MCF 10A (cell line): ENCODE measurements at regions of chr5 and their contacts with region 1.

Region 1: DNA sequence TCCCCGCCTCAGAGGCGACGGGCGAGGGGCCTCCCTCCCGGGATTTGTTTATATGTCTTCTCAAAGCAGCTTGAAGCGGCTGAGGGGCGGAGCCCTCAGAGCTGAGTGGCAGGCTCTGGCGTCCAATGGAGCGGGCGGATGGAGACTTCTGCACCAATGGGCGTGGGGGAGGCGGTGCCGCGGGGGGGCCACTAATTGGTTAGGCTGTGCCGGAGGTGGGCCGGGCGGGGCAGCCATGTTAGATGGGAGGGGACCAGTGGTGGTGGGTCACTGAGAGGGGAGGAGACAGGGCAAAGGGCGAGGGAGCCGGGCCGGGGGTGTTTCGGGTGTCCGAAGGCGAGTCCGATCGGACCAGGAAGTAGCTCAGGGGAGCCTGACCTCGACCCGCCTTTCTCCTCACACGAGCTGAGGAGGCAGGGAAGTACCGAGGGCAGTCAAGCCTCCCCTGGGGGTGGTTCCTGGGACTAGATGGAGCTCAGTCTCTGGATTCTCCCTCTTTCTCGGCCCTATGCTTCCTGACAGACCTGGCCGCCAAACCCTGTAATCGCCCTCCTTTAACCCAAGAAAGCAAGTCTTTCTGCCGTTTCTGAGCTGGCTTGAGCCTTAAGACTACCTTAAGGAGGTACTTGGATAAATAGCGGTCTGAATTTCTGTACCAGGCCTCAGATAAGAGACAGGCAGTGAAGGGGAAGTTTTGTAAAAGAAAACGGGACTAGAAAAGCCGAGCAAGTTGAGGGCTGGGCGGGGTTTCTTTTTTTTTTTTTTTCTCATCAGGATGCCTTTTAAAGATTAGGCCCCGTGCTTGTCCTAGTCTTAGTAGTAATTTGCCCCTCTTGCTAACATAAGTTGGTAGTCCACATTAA is 1.1 kb downstream of the CREBRF start:
- DNase-seq: peak; percentile 100
- H3K4me3 Mint-ChIP-seq: peak overlapping the region; percentile 99
- H3K27ac Mint-ChIP-seq: peak overlapping the region; percentile 80
- H3K4me1 Mint-ChIP-seq: peaks cover 16% of the 10 kb centered on the region
- H3K27me3 Mint-ChIP-seq: no peaks in the 10 kb centered on the region
- CTCF ChIP-seq: no peak

Region 2: DNA sequence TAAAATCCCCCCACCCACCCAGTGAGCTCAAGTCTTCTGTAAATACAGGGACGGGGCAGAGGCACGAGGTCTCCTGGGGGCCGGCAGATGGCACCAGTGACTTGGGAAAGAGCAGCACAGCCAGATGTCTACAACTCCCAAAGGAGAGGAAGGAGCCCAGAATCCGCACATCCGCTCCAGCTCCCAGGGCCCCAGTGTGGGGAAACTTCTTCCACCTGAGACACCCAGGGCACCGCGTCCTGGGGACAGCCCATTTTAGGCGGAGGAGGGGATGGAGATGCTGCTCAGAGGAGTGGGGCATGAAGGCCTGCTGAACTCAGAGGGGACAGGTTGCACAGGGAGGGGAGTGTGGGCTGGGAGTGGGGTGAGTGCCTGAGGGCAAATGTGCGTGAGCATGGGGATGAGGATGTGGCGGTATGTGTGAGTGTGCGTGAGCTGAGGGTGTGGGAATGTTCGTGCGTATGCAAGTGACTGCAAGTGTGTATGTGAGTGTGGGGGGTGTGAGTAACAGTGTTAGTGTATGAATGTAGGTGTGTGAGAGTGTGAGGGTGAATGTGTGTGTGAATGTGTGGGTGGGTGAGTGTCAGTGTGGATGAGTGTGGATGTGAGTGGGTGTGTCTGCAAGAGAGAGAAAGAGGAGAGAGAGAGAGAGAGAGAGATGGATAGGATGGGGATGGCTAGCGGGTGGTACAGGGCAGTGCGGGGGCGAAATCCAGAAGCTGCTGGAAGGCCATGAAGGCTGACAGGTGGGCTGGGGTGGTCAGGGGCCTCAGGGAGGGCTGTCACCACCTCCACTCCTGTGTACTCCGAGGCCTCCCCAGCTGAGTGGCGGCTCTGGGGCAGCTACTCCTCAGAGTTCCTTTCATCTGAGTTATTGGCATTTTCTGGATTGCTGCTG is 349.8 kb before region 1 on chr5:
- CTCF ChIA-PET with region 1: interaction called, 4 read pairs
- POLR2A ChIA-PET with region 1: no interaction called
- intact Hi-C with region 1: loop called (anchors 2 kb)
- DNase-seq: peak; percentile 89
- H3K4me3 Mint-ChIP-seq: no peak overlapping the region
- H3K27ac Mint-ChIP-seq: no peak overlapping the region
- H3K4me1 Mint-ChIP-seq: peaks cover 7% of the 10 kb centered on the region
- H3K27me3 Mint-ChIP-seq: no peaks in the 10 kb centered on the region
- CTCF ChIP-seq: peak; percentile 88

Region 3: DNA sequence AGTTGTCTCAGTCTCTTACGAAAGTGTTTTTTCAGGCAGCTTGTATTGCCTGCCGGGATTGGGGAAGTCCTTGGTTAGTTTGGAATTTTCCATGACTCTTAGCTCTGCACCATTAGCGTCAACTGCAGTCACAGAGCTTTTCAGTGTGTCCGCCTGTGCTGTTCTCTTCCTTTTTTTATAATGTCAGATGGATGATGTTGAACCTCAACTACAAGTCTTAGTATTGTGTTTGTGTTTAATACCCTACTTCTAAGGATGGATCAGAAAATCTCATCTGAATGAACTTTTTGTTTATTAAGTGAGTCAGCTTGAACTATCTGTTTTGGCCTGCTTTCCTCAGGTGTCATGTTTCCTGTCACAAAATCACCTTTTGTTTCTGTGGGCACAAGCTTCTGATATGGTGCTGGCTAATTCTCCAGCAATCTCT is 40.7 kb before region 1 on chr5:
- CTCF ChIA-PET with region 1: no interaction called
- POLR2A ChIA-PET with region 1: interaction called, 11 read pairs
- intact Hi-C with region 1: no loop called
- DNase-seq: peak; percentile 70
- H3K4me3 Mint-ChIP-seq: peak overlapping the region; percentile 35
- H3K27ac Mint-ChIP-seq: peak overlapping the region; percentile 89
- H3K4me1 Mint-ChIP-seq: peaks cover 52% of the 10 kb centered on the region
- H3K27me3 Mint-ChIP-seq: no peaks in the 10 kb centered on the region
- CTCF ChIP-seq: no peak

Region 4: GRCh38 chr5:173041881-173042762 is 15.2 kb before region 1 on chr5:
- CTCF ChIA-PET with region 1: interaction called, 6 read pairs
- POLR2A ChIA-PET with region 1: interaction called, 12 read pairs
- intact Hi-C with region 1: no loop called
- DNase-seq: no peak
- H3K4me3 Mint-ChIP-seq: no peak overlapping the region
- H3K27ac Mint-ChIP-seq: no peak overlapping the region
- H3K4me1 Mint-ChIP-seq: no peaks in the 10 kb centered on the region
- H3K27me3 Mint-ChIP-seq: no peaks in the 10 kb centered on the region
- CTCF ChIP-seq: no peak

Region 5: GRCh38 chr5:173075139-173075982 is 18.1 kb after region 1 on chr5:
- CTCF ChIA-PET with region 1: interaction called, 4 read pairs
- POLR2A ChIA-PET with region 1: interaction called, 12 read pairs
- intact Hi-C with region 1: no loop called
- DNase-seq: no peak
- H3K4me3 Mint-ChIP-seq: no peak overlapping the region
- H3K27ac Mint-ChIP-seq: no peak overlapping the region
- H3K4me1 Mint-ChIP-seq: peaks cover 28% of the 10 kb centered on the region
- H3K27me3 Mint-ChIP-seq: no peaks in the 10 kb centered on the region
- CTCF ChIP-seq: no peak

Region 6: GRCh38 chr5:173144200-173145176 is 87.2 kb after region 1 on chr5 and contains the start of gene BNIP1:
- CTCF ChIA-PET with region 1: interaction called, 5 read pairs
- POLR2A ChIA-PET with region 1: interaction called, 17 read pairs
- intact Hi-C with region 1: loop called (anchors 1 kb)
- DNase-seq: peak; percentile 98
- H3K4me3 Mint-ChIP-seq: peak within 1 kb of the TSS; percentile 98
- H3K27ac Mint-ChIP-seq: peak within 1 kb of the TSS; percentile 97
- H3K4me1 Mint-ChIP-seq: no peaks in the 10 kb centered on the region
- H3K27me3 Mint-ChIP-seq: no peaks in the 10 kb centered on the region
- CTCF ChIP-seq: peak; percentile 98
- total RNA-seq, gene BNIP1: 22.1 and 35.1 TPM in 2 replicates

Region 7: DNA sequence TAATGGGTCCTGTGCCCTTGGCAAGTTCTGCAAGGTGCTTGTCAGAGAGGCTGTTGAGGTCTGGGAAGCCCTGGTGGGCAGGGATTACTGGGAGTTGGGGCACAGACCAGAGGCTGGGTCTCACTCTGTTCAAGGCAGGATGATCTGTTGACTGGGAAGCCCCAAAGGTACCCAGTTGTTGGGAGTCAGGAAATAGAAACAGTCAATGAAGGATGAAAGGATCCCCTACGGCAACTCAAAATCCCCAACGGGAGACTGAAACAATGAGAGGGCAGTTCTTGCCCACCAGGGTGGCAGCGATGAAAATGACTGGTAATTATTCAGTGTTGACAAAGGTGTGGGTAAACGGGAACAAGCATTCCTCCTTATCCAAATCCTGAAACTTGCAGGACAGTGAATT is 118.2 kb after region 1 on chr5:
- CTCF ChIA-PET with region 1: no interaction called
- POLR2A ChIA-PET with region 1: no interaction called
- intact Hi-C with region 1: no loop called
- DNase-seq: no peak
- H3K4me3 Mint-ChIP-seq: no peak overlapping the region
- H3K27ac Mint-ChIP-seq: no peak overlapping the region
- H3K4me1 Mint-ChIP-seq: no peaks in the 10 kb centered on the region
- H3K27me3 Mint-ChIP-seq: no peaks in the 10 kb centered on the region
- CTCF ChIP-seq: no peak

Region 8: GRCh38 chr5:173204185-173204979 is 147.1 kb after region 1 on chr5:
- CTCF ChIA-PET with region 1: no interaction called
- POLR2A ChIA-PET with region 1: interaction called, 3 read pairs
- intact Hi-C with region 1: loop called (anchors 1 kb)
- DNase-seq: peak; percentile 67
- H3K4me3 Mint-ChIP-seq: no peak overlapping the region
- H3K27ac Mint-ChIP-seq: no peak overlapping the region
- H3K4me1 Mint-ChIP-seq: peaks cover 26% of the 10 kb centered on the region
- H3K27me3 Mint-ChIP-seq: peaks cover 33% of the 10 kb centered on the region
- CTCF ChIP-seq: peak; percentile 66